Activated CD4-positive, alpha-beta T cell treated with anti-CD3 and anti-CD28 coated beads for 36 hours (primary cell): ENCODE measurements at regions of chr17 and their contacts with region 1.

Region 1: GRCh38 chr17:50949989-50950881 is 84.1 kb upstream of the TOB1 start:
- DNase-seq: peak; percentile 76
- ATAC-seq: peak; percentile 88
- H3K4me3 Mint-ChIP-seq: no peak overlapping the region
- H3K27ac Mint-ChIP-seq: no peak overlapping the region
- H3K4me1 Mint-ChIP-seq: peaks cover 16% of the 10 kb centered on the region
- H3K27me3 Mint-ChIP-seq: no peaks in the 10 kb centered on the region

Region 2: DNA sequence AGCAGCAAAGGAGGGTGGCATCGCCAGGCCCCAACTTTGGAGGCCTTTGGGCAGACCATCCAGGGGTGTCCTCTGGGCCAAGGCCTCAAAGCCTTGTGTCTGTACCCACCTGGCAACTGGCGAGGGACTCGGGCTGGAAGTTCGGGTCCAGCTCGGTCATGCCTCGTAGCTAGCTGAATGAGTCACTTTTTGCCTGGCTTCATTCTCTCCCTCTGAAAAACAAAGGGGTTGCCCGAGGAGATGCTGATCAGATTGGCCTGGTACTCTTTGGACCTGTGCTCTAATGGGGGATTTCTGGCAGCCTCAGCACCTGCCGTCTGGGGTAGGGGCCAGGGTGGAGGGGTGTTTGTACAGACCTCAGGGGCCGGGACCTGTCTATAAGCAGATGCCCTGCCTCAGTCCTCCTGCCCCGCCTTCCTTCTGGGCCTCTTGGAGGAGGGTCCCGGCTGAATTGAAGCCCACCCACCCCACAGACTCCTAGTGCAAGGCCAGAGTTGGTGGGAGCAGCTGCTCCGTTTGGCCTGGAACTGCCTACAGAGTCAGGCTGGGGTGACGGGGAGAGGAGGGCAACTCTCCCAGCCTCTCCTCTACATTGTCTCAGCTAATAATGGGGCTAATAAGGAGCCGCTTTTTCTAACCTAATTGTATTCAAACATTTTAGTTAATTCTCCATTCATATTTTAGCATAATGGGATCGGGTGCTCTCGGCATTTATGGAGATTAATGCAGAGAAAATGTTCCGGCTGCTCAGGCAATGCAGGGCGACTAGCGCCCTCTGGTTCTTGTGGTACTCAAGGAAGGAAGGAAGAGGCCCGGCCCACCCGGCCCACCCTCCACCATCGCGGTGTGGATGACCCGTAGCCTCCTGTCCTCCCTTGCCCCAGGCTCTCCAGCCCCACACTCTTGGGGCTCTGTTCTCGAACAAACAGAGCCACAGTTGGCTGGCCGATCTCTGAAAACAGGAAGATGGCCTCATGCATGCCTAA is 336.9 kb before region 1 on chr17:
- CTCF ChIA-PET with region 1: no interaction called
- POLR2A ChIA-PET with region 1: no interaction called
- intact Hi-C with region 1: no loop called
- DNase-seq: no peak
- ATAC-seq: no peak
- H3K4me3 Mint-ChIP-seq: no peak overlapping the region
- H3K27ac Mint-ChIP-seq: no peak overlapping the region
- H3K4me1 Mint-ChIP-seq: no peaks in the 10 kb centered on the region
- H3K27me3 Mint-ChIP-seq: no peaks in the 10 kb centered on the region

Region 3: GRCh38 chr17:50904521-50905459 is 45.4 kb before region 1 on chr17:
- CTCF ChIA-PET with region 1: no interaction called
- POLR2A ChIA-PET with region 1: no interaction called
- intact Hi-C with region 1: loop called in 1 of 2 experiments (anchors 5 kb)
- DNase-seq: no peak
- ATAC-seq: no peak
- H3K4me3 Mint-ChIP-seq: no peak overlapping the region
- H3K27ac Mint-ChIP-seq: no peak overlapping the region
- H3K4me1 Mint-ChIP-seq: peaks cover 59% of the 10 kb centered on the region
- H3K27me3 Mint-ChIP-seq: no peaks in the 10 kb centered on the region